Ascending aorta (tissue), 2 donors: ENCODE measurements at regions of chr18 and their contacts with region 1.

Region 1: DNA sequence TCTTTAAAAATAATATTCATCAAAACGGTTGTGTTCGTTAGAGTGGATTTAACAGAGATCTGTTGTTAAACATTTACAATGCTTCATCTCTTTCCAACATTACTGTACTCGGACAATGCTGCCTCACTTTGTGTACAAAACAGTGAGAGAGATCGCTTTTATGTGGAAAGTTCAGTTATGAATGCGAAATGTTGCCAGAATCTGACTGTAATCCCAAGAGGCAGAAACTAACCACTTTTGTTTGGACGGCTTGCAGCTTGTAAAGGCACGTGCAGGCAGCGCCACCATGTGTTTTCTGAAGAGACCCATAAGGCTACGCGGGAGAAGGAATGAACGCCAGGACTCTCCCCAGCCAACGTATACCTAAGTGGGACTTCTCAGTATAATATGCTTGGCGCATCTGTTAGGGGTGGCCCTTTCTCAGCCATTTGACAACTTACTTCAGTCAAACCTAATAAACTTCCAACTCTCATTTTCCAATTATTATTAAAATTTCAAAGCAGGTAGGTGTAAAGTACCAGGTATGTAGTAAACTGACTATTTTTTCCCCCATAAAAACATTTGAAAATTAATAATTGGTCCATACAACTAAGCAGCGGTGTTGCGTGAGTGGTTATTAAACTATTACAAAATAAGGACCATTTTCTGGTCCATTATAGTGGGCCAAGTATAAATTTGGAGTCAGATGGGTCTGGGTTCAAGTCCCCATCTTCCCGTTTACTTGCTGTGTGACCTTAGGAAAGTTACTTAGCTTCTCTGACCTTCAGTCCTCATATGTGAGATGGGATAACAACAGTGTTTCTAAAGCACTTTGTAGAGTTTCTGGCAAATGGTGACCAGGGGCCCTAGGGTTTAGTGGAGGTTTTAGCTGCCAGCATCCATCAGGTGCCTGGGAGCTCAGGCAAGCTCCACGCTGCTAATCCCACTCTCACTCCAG is 5.6 kb upstream of the NAPG start:
- DNase-seq: peak in 1 of 2 donors; percentile 92
- H3K4me3 ChIP-seq: peak overlapping the region in 1 of 2 donors; percentile 13
- H3K27ac ChIP-seq: no peak overlapping the region
- H3K4me1 ChIP-seq: peaks cover 11 to 12% of the 10 kb centered on the region in 2 donors
- H3K27me3 ChIP-seq: no peaks in the 10 kb centered on the region
- CTCF ChIP-seq: peak; percentile 78 to 89 (median 86)

Region 2: DNA sequence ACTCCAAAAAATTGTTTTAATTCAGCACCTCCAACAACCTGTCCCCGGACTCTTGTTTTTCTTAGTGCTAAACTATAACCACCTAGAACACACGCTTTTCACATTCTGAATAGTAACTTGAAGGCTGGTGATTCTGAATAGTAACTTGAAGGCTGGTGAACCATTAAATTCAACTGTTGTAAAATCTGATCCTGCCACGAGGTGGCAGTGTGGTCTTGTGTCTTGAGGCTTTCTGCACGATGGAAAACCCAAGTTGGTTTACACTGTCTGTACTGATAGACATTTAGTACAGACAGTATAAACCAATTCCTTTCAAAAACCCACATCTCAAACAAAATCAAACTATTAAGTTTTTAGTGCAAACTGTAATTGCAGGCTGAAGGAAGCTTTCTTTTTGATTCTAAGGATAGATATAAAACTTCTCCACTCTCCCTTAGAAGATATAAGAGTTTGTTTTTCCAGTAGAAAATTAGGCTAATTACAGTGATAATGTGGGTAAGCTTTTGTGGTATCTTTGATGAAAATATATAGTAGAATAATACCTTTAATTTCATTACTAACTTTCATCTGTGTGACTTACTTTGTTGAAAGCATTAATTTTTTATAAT is 548.9 kb before region 1 on chr18:
- intact Hi-C with region 1: loop called (anchors 1 kb)
- DNase-seq: peak in 1 of 2 donors; percentile 90
- H3K4me3 ChIP-seq: no peak overlapping the region
- H3K27ac ChIP-seq: no peak overlapping the region
- H3K4me1 ChIP-seq: no peaks in the 10 kb centered on the region
- H3K27me3 ChIP-seq: no peaks in the 10 kb centered on the region
- CTCF ChIP-seq: peak; percentile 71 to 84 (median 80)

Region 3: DNA sequence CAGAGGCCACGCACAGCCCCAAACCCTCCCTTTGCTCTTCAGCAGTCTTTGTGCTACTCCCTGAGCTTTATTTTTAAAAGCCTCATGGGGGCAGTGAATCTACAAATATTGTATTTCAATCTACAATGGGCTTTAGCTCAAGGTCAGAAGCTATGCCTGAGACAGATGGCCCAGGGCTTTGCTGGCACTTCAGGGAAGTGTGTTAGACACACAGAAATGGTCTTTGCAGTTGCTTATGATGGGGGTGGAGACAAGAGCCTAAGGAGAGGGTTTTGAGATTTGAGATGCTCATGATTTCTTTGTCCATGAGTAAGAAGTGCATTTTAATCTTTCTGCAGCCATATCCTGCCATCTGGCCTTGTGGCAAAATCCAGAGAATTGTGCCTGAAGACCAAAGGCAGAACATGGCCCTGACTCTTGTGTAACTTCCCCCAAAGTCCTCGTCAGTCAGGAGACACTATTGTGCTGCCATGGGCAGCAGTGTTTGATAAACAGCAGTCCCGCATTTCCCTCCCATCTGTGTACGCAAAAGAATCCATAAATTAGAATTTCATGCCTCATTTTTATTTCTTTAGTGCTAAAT is 513.9 kb before region 1 on chr18:
- intact Hi-C with region 1: loop called (anchors 1 kb)
- DNase-seq: no peak
- H3K4me3 ChIP-seq: no peak overlapping the region
- H3K27ac ChIP-seq: peak overlapping the region in 1 of 2 donors; percentile 29
- H3K4me1 ChIP-seq: peaks cover 13 to 16% of the 10 kb centered on the region in 2 donors
- H3K27me3 ChIP-seq: no peaks in the 10 kb centered on the region
- CTCF ChIP-seq: peak in 2 of 3 experiments; percentile 31 to 55

Region 4: DNA sequence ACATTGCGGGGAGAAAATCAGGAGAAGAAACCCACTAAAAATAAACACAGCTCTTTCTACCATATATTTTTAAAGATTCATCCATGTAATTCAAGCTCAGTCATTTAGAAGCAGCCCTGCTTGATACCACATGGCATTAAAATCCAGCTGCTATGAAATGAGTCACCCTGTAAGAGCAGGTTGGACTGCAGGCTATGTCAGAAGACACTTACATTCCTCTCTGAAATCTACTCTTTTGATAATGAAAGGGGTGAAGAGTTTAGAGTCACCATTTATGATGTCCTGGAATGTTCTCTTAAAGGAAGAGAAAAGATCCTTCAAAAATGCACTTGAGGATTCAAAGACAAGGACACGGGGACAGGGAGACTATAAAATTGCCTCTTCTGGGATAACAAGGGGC is 166.5 kb before region 1 on chr18:
- intact Hi-C with region 1: loop called (anchors 5 kb)
- DNase-seq: no peak
- H3K4me3 ChIP-seq: no peak overlapping the region
- H3K27ac ChIP-seq: peak overlapping the region; percentile 29 to 46
- H3K4me1 ChIP-seq: peaks cover 0 to 10% of the 10 kb centered on the region in 2 donors
- H3K27me3 ChIP-seq: no peaks in the 10 kb centered on the region
- CTCF ChIP-seq: no peak

Region 5: DNA sequence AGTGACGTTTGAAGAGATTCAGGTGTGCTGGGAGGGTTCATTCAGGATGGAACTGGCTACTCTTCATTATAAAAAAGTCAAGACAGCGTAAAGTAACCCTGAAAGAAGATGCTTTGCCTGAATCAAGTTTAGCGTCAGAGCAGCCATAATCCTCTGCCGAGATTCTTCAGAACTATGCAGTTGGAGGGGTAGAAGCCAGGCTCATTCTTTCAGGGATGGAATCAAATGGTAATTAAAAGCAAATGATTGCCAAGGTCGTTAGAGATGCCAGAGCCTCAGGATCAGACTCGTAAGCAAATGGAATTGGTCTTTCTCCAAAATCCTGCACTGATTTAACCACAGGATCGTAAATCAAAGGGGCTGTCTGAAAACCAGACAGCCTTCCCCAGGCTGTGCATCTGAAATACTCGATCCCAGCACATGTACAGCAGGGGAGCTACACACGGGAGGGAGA is 43.9 kb before region 1 on chr18:
- intact Hi-C with region 1: no loop called
- DNase-seq: no peak
- H3K4me3 ChIP-seq: peak overlapping the region in 1 of 2 donors; percentile 21
- H3K27ac ChIP-seq: no peak overlapping the region
- H3K4me1 ChIP-seq: peaks cover 0 to 3% of the 10 kb centered on the region in 2 donors
- H3K27me3 ChIP-seq: no peaks in the 10 kb centered on the region
- CTCF ChIP-seq: no peak

Region 6: DNA sequence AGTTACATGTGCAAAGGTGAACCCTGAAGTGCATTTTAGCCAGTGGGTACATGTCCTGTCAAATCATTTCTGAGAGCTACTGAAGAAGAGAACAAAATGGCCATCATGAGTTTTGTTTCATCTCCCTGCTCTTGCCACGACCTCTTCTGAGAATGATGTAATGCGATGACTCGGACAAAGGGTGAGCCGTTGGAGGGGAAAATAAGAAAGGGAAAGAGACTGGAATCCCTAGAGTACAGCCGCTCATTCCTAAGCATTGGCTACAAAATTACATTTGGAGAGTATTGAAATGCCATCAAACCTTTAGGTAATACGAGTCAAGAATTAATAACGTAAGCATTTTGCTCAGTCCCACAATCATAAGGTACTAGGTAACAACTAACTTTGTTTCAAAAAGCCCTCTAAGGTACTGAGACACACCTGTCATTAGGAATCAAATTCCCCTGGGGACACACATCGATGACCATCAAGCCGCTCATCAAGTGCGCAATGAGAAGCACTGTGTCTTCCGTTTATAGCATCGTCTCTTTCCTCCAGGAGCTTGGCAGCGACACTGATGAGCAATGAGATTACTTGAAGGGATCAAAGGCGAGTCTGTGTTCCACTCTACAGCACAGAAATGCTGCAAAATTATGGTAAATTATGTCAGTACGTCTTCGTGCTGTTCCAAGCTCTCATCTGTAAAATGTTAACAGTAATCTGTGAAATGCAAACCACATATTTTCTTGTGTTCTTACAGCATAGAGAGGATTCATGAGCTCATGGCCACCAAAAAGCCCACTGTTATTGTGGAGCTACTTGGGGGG is 726.4 kb after region 1 on chr18:
- intact Hi-C with region 1: no loop called
- DNase-seq: no peak
- H3K4me3 ChIP-seq: no peak overlapping the region
- H3K27ac ChIP-seq: no peak overlapping the region
- H3K4me1 ChIP-seq: peaks cover 0 to 2% of the 10 kb centered on the region in 2 donors
- H3K27me3 ChIP-seq: no peaks in the 10 kb centered on the region
- CTCF ChIP-seq: no peak